ENCODE measurements at regions of chr1 and their contacts with region 1.

Region 1: DNA sequence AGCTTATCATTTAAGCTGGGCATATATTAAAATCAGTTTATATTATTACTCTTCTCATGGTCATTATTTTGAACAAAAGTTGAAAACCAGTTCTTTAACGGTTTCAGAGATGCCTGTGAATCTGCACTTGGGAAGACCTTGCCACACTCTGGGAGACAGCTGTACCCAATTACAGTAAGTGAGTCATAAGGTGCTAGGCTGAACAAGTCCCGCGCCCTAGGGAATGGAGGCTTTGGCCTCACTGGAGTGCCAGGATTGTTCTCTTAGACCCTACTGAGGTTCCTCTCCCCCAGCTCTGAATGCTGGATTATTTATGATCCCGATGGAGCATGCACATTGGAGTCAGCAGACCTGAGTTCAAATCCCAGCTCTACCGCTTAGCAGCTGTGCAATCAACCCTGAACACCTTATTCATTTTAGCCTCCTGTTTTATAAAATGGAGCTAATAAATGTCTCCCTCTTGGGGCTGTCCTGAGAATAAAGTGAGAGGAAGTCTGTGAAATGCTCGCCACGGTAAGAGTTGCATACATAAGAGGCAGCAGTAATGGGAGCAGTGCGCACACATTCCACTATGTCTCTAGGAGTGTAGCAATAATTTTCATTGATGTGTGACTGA is 266.2 kb downstream of the FOXD2 start:
- DNase-seq: no peak
- H3K4me3 ChIP-seq: no peak overlapping the region
- H3K27ac ChIP-seq: no peak overlapping the region
- H3K4me1 ChIP-seq: peaks cover 3% of the 10 kb centered on the region
- H3K27me3 ChIP-seq: peaks cover 7% of the 10 kb centered on the region
- CTCF ChIP-seq: peak in 1 of 4 experiments; percentile 31
- POLR2A ChIP-seq: no peak

Region 2: DNA sequence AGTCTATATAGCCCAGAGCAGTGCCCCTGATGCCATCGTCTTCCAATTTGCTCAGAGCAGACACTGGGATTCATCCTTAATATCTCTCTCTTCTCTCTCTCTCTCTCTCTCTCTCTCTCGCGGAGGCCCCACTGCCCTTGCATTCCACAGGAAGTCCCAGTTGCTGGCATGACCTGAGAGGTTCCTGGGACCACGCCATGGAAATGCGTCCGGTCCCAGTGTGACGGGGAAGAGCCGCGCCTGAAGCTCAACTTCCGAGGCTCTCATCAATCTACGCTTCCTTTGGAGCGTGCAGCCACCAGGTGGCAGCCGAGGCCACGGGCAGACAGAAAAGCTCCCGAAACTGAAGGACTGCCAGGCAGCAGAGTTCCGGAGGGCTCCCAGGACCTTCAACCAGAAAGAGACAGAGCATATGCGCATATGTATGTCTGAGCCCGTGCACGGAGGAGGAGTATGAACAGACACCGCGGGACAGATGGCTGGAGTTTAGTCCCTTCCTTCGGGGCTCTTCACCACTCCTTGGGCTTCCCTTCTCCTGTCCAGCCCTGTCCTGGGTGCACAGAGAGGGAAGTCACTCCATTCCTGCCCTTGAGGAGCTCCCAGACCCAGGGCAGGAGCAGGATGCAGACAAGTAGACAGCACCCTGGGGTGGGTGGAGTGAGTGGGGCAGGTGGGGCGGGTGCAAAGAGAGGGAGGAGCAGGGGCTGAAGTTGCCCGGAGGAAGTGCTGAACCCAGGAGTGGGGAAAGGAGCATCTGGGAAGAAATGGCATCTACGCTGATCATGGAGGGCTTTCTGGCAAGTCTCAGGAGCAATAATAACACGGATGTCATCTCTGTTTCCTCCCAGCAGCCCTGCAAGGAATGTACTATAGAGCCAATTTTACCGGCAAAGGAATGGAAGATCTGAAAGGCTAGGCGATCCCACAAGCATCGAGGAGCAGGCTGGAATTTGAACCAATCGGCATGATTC is 524.8 kb before region 1 on chr1:
- intact Hi-C with region 1: no loop called
- DNase-seq: peak; percentile 83
- H3K4me3 ChIP-seq: peak overlapping the region; percentile 19 to 24
- H3K27ac ChIP-seq: peak overlapping the region in 1 of 2 donors; percentile 2
- H3K4me1 ChIP-seq: no peaks in the 10 kb centered on the region
- H3K27me3 ChIP-seq: no peaks in the 10 kb centered on the region
- CTCF ChIP-seq: peak; percentile 77 to 92 (median 89)
- POLR2A ChIP-seq: no peak

Region 3: GRCh38 chr1:47507881-47508701 is 196.0 kb before region 1 on chr1:
- intact Hi-C with region 1: loop called (anchors 5 kb)
- DNase-seq: peak; percentile 27
- H3K4me3 ChIP-seq: peak overlapping the region; percentile 35 to 41
- H3K27ac ChIP-seq: peak overlapping the region; percentile 44 to 56
- H3K4me1 ChIP-seq: no peaks in the 10 kb centered on the region
- H3K27me3 ChIP-seq: no peaks in the 10 kb centered on the region
- CTCF ChIP-seq: no peak
- POLR2A ChIP-seq: no peak

Region 4: DNA sequence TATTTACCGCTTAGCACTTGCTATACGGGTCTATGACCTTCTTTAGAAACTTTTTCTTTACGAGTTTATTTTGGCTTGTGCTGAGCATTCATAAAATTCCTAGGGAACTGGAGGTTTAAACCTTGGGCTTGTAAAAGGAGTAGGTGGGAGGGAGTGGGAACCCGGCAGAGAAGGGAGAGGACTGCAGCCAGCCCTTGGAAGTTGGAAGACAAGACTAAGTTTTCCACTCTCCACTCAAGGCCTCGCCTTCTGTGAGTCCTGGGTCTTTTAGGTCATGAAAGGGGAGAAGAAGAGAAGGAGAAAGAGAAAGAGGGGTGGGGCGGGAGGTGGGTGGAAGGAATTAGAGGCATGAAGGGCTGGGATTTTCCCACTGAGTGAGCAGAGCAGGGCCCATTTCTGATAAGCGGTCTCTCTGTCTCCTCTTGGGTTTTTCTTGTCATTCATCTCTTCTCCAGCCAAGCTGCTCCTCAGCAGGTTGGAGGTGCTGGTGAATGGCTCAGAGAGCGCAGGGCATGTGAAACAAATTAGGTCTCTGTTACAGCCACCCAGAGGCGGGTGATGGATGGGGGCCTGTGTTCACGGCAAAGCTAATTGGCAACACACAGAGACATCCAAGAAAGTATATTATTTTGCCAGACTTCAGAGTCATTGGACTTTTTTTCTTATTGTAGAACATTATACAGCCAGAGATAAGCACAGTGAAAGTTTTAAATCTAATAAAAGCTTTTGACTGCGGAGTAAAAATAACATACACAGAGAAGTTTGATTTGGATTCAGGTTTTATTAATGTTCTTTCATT is 18.9 kb before region 1 on chr1:
- intact Hi-C with region 1: loop called (anchors 2 kb)
- DNase-seq: peak; percentile 57
- H3K4me3 ChIP-seq: no peak overlapping the region
- H3K27ac ChIP-seq: peak overlapping the region; percentile 28 to 51
- H3K4me1 ChIP-seq: peaks cover 11% of the 10 kb centered on the region
- H3K27me3 ChIP-seq: no peaks in the 10 kb centered on the region
- CTCF ChIP-seq: no peak
- POLR2A ChIP-seq: no peak

Measured in prostate gland (tissue), 2 donors.